ENCODE measurements at regions of chr9 and their contacts with region 1.

Region 1: DNA sequence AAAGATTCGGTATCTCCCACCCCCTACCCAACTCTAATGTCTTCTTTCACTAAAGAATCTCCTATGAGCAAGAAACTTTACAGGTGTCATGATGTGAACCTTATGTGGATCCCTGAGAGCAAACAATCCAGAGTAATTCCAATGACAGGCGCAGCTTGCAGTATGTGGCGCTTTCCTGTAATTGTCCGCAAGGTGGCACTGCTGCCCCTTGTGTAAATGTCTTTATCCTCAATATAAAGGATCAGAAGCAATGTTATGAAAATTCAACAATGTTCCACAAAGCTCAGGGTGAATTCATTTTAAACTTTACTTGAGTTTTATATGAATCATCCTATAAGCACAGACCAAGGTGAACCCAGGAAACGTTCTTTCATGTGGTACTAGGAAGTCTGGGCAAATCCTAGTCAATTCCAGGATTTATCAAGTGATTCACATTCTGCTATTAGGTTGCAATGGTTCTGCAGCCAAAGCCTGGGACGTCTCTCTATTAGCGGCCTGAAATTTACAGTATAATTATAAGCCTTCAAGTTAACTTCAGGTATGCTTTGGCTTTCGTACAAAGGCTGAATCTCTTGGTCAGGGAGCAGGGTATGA is 113.7 kb downstream of the TRPM6 start:
- DNase-seq: peak; percentile 47
- H3K4me3 Mint-ChIP-seq: no peak overlapping the region
- H3K27ac Mint-ChIP-seq: no peak overlapping the region
- H3K4me1 Mint-ChIP-seq: peaks cover 20% of the 10 kb centered on the region
- H3K27me3 Mint-ChIP-seq: peaks cover 10% of the 10 kb centered on the region

Region 2: GRCh38 chr9:74887041-74887980 is 113.3 kb after region 1 on chr9 and contains the start of gene TRPM6:
- intact Hi-C with region 1: loop called (anchors 5 kb)
- DNase-seq: peak; percentile 33
- H3K4me3 Mint-ChIP-seq: peak within 1 kb of the TSS; percentile 89
- H3K27ac Mint-ChIP-seq: peak within 1 kb of the TSS; percentile 9
- H3K4me1 Mint-ChIP-seq: peaks cover 22% of the 10 kb centered on the region
- H3K27me3 Mint-ChIP-seq: peaks cover 36% of the 10 kb centered on the region
- total RNA-seq, gene TRPM6: 0.02 and 0.05 TPM in 2 replicates

Region 3: DNA sequence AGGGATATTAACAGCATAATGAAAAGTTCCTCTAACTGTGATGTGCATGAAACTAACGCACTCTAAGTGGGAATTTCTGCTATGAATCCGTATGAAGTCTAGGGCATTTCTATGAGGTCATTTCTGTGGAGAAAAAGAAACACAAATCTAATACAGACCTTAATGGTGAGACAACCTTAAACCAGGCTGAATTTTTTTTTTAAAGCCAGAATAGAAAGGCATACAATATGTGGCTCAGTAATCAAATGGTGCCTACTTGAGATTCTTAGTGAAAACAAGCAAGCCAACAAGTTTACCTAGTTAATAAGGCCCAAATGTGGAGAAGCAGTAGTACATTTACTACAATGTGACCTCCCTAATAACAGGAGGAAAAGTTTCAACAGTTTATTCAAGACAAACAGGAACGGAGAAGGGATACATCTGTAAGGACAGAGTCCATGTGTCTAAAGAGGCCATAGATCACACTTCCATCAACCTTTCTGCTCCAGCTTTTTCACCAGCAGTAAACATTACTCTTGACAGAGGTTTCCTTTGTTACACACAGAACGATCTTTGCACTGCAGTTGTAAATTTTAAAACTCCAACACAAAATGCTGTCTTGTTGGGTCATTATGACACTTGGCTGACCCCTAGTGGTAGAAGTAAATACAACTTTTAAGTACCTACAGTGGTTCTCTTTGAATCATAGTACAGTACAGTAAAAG is 227.9 kb after region 1 on chr9:
- intact Hi-C with region 1: loop called (anchors 1 kb)
- DNase-seq: no peak
- H3K4me3 Mint-ChIP-seq: no peak overlapping the region
- H3K27ac Mint-ChIP-seq: no peak overlapping the region
- H3K4me1 Mint-ChIP-seq: no peaks in the 10 kb centered on the region
- H3K27me3 Mint-ChIP-seq: no peaks in the 10 kb centered on the region

Region 4: DNA sequence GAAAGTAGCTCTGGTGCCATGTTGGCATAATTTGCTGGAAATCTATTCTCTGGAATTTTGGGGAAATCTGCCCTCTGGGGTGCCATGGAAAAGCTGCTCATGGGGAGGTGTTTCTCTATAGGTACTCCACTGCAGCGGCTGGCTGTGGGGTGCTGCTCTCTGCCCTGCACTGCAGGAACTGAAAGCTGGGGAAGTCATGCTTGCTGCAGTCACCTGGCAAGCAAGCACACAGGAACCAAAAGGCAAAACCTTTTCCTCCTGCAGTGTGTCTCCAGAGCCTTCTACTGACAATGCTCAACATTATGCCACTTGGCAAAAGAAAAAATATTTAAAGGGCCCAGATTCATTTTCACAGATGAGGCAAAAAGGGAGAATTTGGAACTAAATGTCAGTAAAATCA is 279.9 kb after region 1 on chr9:
- intact Hi-C with region 1: no loop called
- DNase-seq: no peak
- H3K4me3 Mint-ChIP-seq: no peak overlapping the region
- H3K27ac Mint-ChIP-seq: no peak overlapping the region
- H3K4me1 Mint-ChIP-seq: no peaks in the 10 kb centered on the region
- H3K27me3 Mint-ChIP-seq: peaks cover 1% of the 10 kb centered on the region

Region 5: DNA sequence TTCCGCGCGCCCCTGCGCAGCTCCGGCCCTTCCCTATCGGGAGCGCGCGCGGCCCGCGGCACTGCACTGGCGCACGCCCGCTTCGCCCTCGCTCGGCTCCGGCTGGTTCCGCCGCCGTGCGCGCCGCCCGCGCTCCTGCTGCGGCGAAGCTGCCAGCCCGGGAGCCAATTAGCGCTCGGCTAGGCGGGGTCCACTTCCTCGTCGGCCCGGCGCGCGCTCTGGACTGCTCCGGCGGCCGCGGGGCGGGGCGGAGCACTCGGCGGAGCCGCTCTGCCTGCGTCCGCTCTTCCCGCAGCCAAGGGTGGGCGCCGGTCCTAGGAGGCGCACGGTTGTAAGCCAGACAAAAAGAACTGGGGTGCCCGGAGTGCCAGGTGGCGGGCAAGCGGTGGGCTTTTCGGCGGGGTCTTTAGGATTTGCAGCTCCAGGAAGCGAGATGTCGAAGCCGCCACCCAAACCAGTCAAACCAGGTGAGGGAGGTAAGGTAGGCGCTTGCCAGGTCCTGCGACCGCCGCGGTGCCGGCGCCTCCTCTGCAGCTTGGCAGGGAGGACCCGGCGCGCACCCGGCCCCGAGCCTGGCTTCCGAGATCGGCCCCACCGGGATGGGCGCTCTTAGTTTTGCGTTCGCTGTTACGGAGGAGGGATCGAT is 314.4 kb after region 1 on chr9 and contains the start of gene OSTF1:
- intact Hi-C with region 1: no loop called
- DNase-seq: peak; percentile 95
- H3K4me3 Mint-ChIP-seq: peak within 1 kb of the TSS; percentile 99
- H3K27ac Mint-ChIP-seq: peak within 1 kb of the TSS; percentile 97
- H3K4me1 Mint-ChIP-seq: peaks cover 64% of the 10 kb centered on the region
- H3K27me3 Mint-ChIP-seq: no peaks in the 10 kb centered on the region
- total RNA-seq, gene OSTF1: 49.5 and 53.6 TPM in 2 replicates

Region 6: GRCh38 chr9:75185585-75186170 is 411.7 kb after region 1 on chr9:
- intact Hi-C with region 1: loop called (anchors 5 kb)
- DNase-seq: peak; percentile 11
- H3K4me3 Mint-ChIP-seq: no peak overlapping the region
- H3K27ac Mint-ChIP-seq: no peak overlapping the region
- H3K4me1 Mint-ChIP-seq: peaks cover 27% of the 10 kb centered on the region
- H3K27me3 Mint-ChIP-seq: no peaks in the 10 kb centered on the region

Region 7: GRCh38 chr9:75866273-75866871 is 1092.4 kb after region 1 on chr9:
- intact Hi-C with region 1: loop called (anchors 10 kb)
- DNase-seq: no peak
- H3K4me3 Mint-ChIP-seq: no peak overlapping the region
- H3K27ac Mint-ChIP-seq: no peak overlapping the region
- H3K4me1 Mint-ChIP-seq: no peaks in the 10 kb centered on the region
- H3K27me3 Mint-ChIP-seq: peaks cover 3% of the 10 kb centered on the region